Head of caudate nucleus (tissue), 42 donors: ENCODE measurements at regions of chr10 and their contacts with region 1.

Region 1: GRCh38 chr10:97025613-97026242 is 160.0 kb downstream of the SLIT1 start:
- DNase-seq: peak in 40 of 42 donors; percentile 48 to 91 (median 73)

Region 2: DNA sequence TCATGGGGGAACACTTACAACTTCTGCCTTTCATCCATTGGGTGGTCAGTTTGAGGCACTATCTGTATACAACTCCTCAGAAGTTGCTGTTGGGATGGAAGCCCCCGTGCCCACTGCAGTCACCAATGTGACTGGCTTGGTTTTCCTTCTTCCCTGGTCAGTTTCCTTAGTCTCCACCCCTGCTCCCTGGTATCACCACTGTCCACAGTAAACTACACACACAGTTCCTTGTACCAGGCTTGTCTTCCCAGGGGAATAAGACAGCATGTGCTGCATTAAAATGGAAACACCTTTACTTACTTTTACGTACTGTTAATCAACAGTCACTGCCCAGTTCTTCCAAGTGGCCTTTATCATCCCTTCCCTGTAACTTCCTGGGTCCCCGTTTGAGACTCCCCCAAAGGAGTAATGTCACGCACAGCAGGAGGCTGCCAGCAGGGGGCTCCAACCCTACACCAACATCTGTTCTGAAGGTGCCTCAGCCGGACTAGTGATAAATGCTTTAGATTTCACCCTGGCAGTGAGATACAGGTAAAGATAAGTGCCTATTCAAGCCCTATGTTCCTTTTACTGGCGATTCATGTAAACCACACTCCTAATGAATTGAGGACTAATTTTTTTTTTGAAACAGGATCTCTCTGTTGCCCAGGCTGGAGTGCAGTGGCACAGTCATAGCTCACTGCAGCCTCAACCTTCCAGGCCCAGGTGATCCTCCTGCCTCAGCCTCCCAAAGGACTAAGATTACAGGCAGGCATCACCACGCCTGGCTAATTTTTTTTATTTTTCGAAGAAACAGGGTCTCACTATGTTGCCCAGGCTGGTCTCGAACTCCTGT is 260.1 kb before region 1 on chr10:
- intact Hi-C with region 1: loop called (anchors 10 kb)
- DNase-seq: peak; percentile 26 to 86 (median 71)

Region 3: DNA sequence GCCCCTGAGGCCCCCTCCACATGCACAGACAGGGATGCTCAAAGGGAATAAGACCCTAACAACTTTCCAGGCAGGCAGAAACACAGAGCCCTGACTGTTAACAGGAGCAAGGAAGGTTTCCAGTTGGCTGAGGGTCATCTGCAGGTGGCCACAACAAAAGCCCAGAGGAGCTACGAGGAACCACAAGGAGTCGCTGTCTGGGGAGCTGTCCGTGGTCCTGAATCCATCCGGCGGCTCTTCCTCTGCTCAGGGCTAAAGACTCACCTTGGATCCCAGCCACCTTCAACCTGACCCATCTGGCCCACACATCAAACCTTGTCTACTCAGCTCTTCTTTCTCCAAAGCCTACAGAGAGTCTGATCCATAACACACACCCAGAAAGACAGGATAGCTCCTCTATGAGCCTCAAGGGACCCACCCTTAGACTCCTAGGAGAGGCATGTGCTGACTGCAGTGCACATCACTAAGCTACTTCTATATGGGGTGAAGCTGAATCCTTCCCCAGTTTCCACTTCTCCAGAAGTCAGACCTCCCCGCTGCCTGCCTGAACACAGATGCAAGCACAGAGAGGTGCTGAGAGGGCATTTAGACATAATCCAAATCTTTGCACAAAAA is 56.0 kb after region 1 on chr10:
- intact Hi-C with region 1: no loop called
- DNase-seq: peak in 11 of 42 donors; percentile 24 to 72 (median 44)

Region 4: DNA sequence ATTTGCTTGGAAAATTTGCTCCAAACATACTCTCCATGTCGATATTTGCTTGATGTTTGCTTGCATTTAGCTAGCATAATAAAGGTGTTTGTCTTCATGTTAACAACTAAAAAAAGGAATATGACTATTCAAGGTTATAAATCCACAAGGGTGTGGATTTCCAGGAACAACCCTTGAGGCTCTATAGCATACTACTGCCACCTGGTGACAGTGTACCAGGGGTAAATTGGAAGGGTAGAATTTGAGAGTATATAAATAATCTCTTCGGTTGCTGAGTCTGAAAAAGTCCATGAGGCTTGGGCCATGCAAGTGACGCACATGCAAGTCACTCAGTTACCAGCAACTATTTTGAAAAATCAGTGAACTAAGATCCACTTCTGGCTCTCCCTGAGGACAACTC is 91.6 kb after region 1 on chr10:
- intact Hi-C with region 1: no loop called
- DNase-seq: no peak

Region 5: DNA sequence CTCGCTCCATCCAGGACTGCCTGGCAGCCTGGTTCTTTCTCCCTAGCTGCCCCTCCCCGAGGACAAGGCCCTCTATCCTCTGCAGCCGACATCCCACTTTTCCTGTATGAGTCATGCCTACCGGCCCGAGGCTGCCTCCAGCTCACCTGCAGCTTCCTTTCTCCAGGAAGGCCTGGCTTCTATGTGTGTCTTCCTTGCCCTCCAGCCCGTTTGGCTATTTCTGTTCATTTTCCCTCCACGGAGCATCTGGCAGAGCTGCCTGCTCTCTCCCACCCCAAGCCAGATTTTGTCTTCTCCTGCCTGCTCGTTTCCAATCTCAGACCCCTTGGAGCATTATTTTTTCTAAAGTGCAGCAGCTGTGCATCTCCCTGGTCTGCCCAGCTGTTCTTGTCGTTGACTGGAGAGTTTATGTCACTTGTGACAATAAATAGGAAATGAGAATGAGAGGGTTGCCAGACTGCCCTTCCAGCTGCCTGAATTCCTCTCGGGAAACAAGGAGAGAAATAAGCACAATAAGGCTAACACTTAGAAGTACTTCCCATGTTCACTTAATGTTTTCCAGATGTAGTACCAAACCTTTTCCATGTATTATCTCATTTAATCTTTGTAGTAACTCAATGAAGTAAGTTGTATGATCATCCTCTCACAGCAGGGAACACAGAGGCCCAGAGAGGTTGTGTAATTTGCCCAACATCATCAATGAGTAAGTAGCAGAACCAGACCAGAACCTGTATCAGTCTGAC is 492.7 kb after region 1 on chr10:
- intact Hi-C with region 1: no loop called
- DNase-seq: no peak